ENCODE measurements at regions of chr15 and their contacts with region 1.

Region 1: GRCh38 chr15:68817304-68818065 is 3.2 kb downstream of the ANP32A start:
- DNase-seq: peak; percentile 43 to 67
- ATAC-seq: peak; percentile 30 to 47
- H3K4me3 ChIP-seq: peak overlapping the region; percentile 69 to 97 (median 87)
- H3K27ac ChIP-seq: peak overlapping the region; percentile 93 to 99 (median 99)
- H3K4me1 ChIP-seq: peaks cover 47% of the 10 kb centered on the region in 2 donors
- H3K27me3 ChIP-seq: no peaks in the 10 kb centered on the region
- CTCF ChIP-seq: no peak
- POLR2A ChIP-seq: peak; percentile 39 to 51

Region 2: GRCh38 chr15:68277603-68278344 is 539.7 kb before region 1 on chr15 and contains the start of gene FEM1B:
- in situ Hi-C with region 1: no loop called
- intact Hi-C with region 1: loop called (anchors 10 kb)
- DNase-seq: peak; percentile 90 to 92
- ATAC-seq: peak; percentile 60 to 68
- H3K4me3 ChIP-seq: peak within 1 kb of the TSS; percentile 73 to 97 (median 81)
- H3K27ac ChIP-seq: peak within 1 kb of the TSS; percentile 97 to 100 (median 99)
- H3K4me1 ChIP-seq: peaks cover 58 to 76% of the 10 kb centered on the region in 2 donors
- H3K27me3 ChIP-seq: no peaks in the 10 kb centered on the region
- CTCF ChIP-seq: peak in 2 of 5 experiments; percentile 40 to 42
- POLR2A ChIP-seq: peak; percentile 94 to 96
- total RNA-seq, gene FEM1B: 80.8 to 158 (median 124) TPM

Region 3: DNA sequence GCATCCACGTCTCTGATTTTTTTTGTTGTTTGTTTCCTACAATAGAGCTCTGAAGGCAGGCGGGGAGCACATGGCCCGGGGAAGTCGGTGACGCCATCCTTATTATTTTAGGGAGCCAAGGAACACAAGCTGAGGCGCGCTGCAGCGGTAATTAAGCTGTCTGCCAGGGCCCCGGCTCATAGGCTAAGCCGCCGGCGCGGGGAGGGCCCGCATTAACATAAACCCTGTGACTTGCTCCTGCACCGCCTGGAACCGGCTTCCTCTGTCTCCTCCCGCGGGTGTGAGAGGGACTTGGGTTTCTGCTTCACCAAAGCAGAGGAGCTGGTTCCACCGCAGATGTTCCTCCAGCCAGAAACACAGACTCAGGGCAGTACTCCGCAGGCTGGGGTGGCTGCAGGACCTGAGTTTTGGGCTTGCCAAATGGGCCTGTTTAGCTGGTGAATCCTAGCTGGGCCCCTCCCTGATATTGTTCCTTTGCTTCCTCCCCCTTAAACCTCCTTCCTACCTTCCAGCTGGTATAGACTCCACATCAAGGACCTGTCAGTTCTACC is 22.1 kb before region 1 on chr15:
- in situ Hi-C with region 1: no loop called
- intact Hi-C with region 1: loop called (anchors 1 kb)
- DNase-seq: peak; percentile 87 to 90
- ATAC-seq: peak; percentile 85 to 89
- H3K4me3 ChIP-seq: peak overlapping the region; percentile 19 to 58 (median 30)
- H3K27ac ChIP-seq: peak overlapping the region; percentile 80 to 93 (median 90)
- H3K4me1 ChIP-seq: peaks cover 83 to 87% of the 10 kb centered on the region in 2 donors
- H3K27me3 ChIP-seq: no peaks in the 10 kb centered on the region
- CTCF ChIP-seq: no peak
- POLR2A ChIP-seq: peak; percentile 49 to 74

Region 4: GRCh38 chr15:68909601-68910100 is 92.2 kb after region 1 on chr15:
- in situ Hi-C with region 1: no loop called
- intact Hi-C with region 1: no loop called
- DNase-seq: no peak
- ATAC-seq: no peak
- H3K4me3 ChIP-seq: no peak overlapping the region
- H3K27ac ChIP-seq: no peak overlapping the region
- H3K4me1 ChIP-seq: no peaks in the 10 kb centered on the region
- H3K27me3 ChIP-seq: no peaks in the 10 kb centered on the region
- CTCF ChIP-seq: no peak
- POLR2A ChIP-seq: no peak

Region 5: GRCh38 chr15:68983961-68984481 is 166.5 kb after region 1 on chr15:
- in situ Hi-C with region 1: no loop called
- intact Hi-C with region 1: no loop called
- DNase-seq: no peak
- ATAC-seq: no peak
- H3K4me3 ChIP-seq: no peak overlapping the region
- H3K27ac ChIP-seq: no peak overlapping the region
- H3K4me1 ChIP-seq: no peaks in the 10 kb centered on the region
- H3K27me3 ChIP-seq: no peaks in the 10 kb centered on the region
- CTCF ChIP-seq: no peak
- POLR2A ChIP-seq: no peak